Psoas muscle (tissue), 8 donors: ENCODE measurements at regions of chr14 and their contacts with region 1.

Region 1: DNA sequence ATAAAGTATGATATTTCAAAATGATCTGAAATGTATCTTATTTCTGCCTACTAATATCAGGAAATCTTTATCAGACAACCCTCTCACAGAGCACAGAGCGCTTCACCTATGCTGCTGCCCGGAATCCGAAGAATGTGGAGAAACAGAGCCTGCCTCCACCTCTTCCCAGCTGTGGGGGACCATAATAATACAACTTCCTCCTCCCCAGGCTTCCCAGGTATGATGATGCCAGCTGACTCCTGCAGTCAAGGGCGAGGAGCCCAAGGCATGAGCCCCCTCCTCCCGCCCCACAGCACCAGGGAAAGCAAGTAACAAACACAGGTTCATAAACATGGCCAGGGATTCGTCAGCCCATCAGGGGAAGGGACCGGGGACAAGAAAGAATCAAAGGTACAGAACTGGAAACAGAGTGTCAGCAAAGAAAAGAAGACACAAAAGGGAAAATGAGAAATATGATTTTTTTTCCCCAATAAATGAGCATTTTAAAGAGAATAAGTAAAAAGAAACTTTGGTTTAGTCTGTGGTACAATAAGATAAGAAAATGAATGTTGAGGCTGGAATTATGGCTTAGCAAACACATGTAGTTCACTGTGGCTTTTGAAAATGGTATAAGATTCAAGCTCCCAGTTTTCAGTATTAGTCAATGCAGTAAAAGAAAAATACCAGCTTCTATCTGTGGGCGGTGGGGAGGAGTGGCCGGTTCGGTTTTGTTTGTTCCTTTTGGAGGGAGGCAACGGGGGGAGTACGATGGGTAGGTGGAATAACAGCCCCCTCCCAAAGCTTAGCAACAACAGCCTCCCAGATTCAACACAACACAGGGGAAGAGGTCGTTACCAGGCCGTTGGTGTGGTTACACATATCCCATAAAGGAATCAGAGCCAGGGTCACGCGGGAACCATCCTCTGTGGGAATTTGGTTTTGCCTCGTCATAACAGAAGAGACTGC is 68.3 kb downstream of the SETD3 start:
- DNase-seq: no peak
- ATAC-seq: no peak
- H3K4me3 ChIP-seq: no peak overlapping the region
- H3K27ac ChIP-seq: no peak overlapping the region
- H3K4me1 ChIP-seq: peaks cover 4% of the 10 kb centered on the region
- H3K27me3 ChIP-seq: no peaks in the 10 kb centered on the region
- CTCF ChIP-seq: no peak

Region 2: GRCh38 chr14:99320105-99320572 is 92.2 kb before region 1 on chr14:
- intact Hi-C with region 1: loop called in 1 of 2 experiments (anchors 5 kb)
- DNase-seq: no peak
- ATAC-seq: peak in 1 of 4 donors; percentile 49
- H3K4me3 ChIP-seq: no peak overlapping the region
- H3K27ac ChIP-seq: no peak overlapping the region
- H3K4me1 ChIP-seq: no peaks in the 10 kb centered on the region
- H3K27me3 ChIP-seq: peaks cover 0 to 12% (median 11%) of the 10 kb centered on the region in 3 donors
- CTCF ChIP-seq: peak; percentile 62